ENCODE measurements at regions of chr3 and their contacts with region 1.

Region 1: DNA sequence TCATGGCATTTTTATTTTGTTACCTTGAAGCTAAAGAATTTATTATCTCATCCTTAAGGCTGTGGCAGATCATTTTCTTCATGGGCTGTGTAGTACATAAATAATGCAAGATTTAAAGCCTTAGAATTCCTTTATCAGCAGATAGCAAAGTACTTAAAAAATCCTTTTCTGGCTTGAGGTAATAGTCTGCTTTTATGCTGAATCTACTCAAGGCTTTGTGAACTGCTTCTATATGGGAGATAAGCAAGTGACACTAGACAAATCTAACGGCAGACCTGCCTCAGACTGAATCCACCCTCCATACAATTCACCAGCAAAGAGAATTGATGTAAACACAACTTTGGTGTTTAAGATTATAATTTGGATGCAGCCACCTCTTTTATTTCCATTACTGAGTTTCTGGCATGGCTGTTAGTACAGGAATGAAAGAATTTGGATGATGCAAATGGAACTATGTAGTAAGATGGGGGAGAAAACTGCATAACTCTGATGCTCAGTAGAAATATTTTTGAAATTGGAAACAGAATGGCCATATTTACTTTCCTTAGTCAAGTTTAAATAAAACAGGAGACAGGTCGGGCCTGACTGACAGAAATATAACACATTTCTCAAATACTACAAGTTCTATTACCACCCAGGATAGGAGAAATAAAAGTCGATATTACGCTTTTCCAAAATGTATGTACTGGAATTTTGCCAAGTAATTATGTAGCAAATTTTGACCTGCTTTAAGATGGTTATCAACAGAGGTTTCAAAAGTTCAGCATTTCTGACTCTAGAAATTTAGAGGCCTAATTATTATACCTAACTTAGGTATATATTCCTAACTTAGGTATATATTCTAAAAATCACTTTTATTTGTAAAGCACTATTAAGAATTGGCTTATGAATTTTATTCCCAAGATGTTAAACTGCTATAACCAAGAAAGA is 1121.6 kb downstream of the NAALADL2 start:
- DNase-seq: no peak
- H3K4me3 ChIP-seq: no peak overlapping the region
- H3K4me3 Mint-ChIP-seq: no peak overlapping the region
- H3K27ac Mint-ChIP-seq: no peak overlapping the region
- H3K4me1 ChIP-seq: no peaks in the 10 kb centered on the region
- H3K4me1 Mint-ChIP-seq: no peaks in the 10 kb centered on the region
- H3K27me3 ChIP-seq: no peaks in the 10 kb centered on the region
- H3K27me3 Mint-ChIP-seq: no peaks in the 10 kb centered on the region
- CTCF ChIP-seq: no peak

Region 2: DNA sequence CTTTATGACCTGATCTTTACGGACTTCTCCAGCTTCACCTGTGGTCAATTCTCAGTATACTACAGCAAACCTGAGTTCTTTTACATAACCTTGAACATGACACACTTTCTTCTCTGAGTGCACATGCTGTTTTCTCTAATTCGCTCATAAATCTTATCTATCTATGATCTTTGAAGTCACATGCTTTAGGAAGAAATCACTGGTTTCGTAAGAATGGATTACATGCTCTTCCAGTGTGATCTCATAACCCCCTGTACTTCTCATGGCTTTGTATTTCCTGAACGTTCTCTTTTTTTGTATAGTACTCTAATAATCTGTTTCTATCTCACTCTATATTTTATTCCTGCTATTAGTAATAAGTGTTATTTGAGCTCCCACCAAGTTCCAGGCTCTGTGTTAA is 51.3 kb after region 1 on chr3:
- CTCF ChIA-PET with region 1: no interaction called
- POLR2A ChIA-PET with region 1: no interaction called
- intact Hi-C with region 1: loop called (anchors 2 kb)
- DNase-seq: no peak
- H3K4me3 ChIP-seq: no peak overlapping the region
- H3K4me3 Mint-ChIP-seq: no peak overlapping the region
- H3K27ac Mint-ChIP-seq: no peak overlapping the region
- H3K4me1 ChIP-seq: no peaks in the 10 kb centered on the region
- H3K4me1 Mint-ChIP-seq: no peaks in the 10 kb centered on the region
- H3K27me3 ChIP-seq: no peaks in the 10 kb centered on the region
- H3K27me3 Mint-ChIP-seq: no peaks in the 10 kb centered on the region
- CTCF ChIP-seq: no peak